ENCODE measurements at regions of chr1 and their contacts with region 1.

Region 1: GRCh38 chr1:33349778-33350610 is 29.1 kb upstream of the A3GALT2 start:
- DNase-seq: peak; percentile 77
- ATAC-seq: peak; percentile 88
- H3K4me3 Mint-ChIP-seq: peak overlapping the region; percentile 91
- H3K27ac Mint-ChIP-seq: peak overlapping the region; percentile 93
- H3K4me1 Mint-ChIP-seq: peaks cover 37% of the 10 kb centered on the region
- H3K27me3 Mint-ChIP-seq: no peaks in the 10 kb centered on the region
- CTCF ChIP-seq: no peak

Region 2: DNA sequence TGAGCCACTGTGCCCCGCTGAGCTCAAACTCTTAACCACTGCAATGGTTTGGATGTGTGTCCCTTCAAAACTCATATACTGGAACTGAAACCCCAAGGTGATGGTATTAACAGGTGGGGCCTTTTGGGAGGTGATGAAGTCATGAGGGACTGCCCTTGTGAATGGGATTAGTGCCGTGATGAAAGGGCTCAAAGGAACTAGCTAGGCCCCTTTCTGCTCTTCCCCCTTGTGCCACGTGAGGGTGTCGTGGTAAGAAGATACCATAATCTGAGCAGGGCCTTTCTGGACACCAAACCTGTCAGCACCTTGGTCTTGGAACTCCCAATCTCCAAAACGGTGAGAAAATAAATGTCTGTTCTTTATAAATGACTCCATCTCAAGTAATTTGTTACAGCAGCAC is 1488.6 kb before region 1 on chr1:
- CTCF ChIA-PET with region 1: no interaction called
- POLR2A ChIA-PET with region 1: no interaction called
- intact Hi-C with region 1: no loop called
- DNase-seq: no peak
- ATAC-seq: peak; percentile 67
- H3K4me3 Mint-ChIP-seq: no peak overlapping the region
- H3K27ac Mint-ChIP-seq: no peak overlapping the region
- H3K4me1 Mint-ChIP-seq: peaks cover 6% of the 10 kb centered on the region
- H3K27me3 Mint-ChIP-seq: no peaks in the 10 kb centered on the region
- CTCF ChIP-seq: no peak

Region 3: DNA sequence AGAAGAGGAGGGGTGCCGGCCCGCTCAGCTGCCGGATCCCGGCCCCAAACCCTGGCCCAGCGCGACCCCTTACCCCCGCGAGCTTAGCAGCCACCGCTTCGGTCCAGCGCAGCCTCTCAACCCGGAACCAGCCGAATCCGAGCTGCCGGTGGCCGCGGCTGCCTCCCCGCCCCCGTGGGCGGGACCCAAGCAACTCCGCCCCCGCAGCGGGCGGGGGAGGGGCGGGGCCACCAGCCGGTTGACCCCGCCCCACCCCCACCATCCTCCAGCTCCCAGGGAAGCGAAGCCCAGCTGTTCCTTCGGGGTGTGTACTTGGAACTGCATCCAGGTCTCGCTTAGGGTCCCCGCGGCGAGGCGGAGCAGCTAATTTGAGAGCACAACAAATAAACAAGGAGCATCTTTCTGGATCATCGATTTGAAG is 168.1 kb before region 1 on chr1 and contains the start of gene TRIM62:
- CTCF ChIA-PET with region 1: no interaction called
- POLR2A ChIA-PET with region 1: interaction called, 8 read pairs
- intact Hi-C with region 1: loop called (anchors 1 kb)
- DNase-seq: peak; percentile 80
- ATAC-seq: peak; percentile 67
- H3K4me3 Mint-ChIP-seq: peak within 1 kb of the TSS; percentile 89
- H3K27ac Mint-ChIP-seq: peak within 1 kb of the TSS; percentile 79
- H3K4me1 Mint-ChIP-seq: peaks cover 21% of the 10 kb centered on the region
- H3K27me3 Mint-ChIP-seq: peaks cover 9% of the 10 kb centered on the region
- CTCF ChIP-seq: no peak
- total RNA-seq, gene TRIM62: 10.1 and 10.9 TPM in 2 replicates

Region 4: GRCh38 chr1:33211972-33212371 is 138.0 kb before region 1 on chr1:
- CTCF ChIA-PET with region 1: no interaction called
- POLR2A ChIA-PET with region 1: no interaction called
- intact Hi-C with region 1: no loop called
- DNase-seq: no peak
- ATAC-seq: peak; percentile 14
- H3K4me3 Mint-ChIP-seq: no peak overlapping the region
- H3K27ac Mint-ChIP-seq: no peak overlapping the region
- H3K4me1 Mint-ChIP-seq: no peaks in the 10 kb centered on the region
- H3K27me3 Mint-ChIP-seq: peaks cover 36% of the 10 kb centered on the region
- CTCF ChIP-seq: no peak

Region 5: DNA sequence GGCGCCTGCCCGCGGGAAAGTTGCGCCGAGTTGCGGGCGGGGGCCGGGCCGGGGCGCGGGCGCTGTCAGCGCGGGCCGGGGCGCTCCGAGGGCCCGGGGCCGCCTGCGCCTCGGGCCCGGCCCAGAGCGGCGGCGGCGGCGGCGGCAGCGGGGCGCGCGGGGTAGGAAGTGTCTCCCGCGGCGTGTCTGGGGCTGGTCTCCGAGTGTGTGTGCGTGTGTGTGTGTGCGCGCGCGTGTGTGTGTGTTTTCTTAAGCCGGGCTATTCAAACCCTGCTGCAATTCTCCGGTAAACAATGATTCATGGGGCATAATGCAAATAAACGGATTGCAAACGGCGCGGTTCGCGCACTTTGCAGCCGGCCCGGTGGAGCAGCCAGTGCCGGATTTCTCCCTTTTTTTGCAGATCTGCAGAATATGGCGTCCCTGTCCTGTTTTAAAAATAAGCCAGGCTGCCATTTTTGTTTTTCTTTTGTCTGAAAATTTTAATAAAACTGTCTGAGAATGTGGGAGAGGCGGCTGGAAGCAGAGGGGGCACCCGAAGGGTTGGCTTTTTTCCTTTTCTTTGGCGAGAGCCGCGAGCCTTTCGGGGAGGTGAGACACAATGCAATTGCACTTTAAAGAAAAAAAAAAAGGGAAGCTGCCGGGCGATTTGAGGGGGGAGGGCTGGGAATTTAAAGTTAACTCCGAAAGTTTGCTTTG is 93.1 kb before region 1 on chr1:
- CTCF ChIA-PET with region 1: no interaction called
- POLR2A ChIA-PET with region 1: interaction called, 3 read pairs
- intact Hi-C with region 1: loop called (anchors 5 kb)
- DNase-seq: no peak
- ATAC-seq: peak; percentile 60
- H3K4me3 Mint-ChIP-seq: peak overlapping the region; percentile 97
- H3K27ac Mint-ChIP-seq: peak overlapping the region; percentile 95
- H3K4me1 Mint-ChIP-seq: peaks cover 34% of the 10 kb centered on the region
- H3K27me3 Mint-ChIP-seq: no peaks in the 10 kb centered on the region
- CTCF ChIP-seq: no peak

Region 6: DNA sequence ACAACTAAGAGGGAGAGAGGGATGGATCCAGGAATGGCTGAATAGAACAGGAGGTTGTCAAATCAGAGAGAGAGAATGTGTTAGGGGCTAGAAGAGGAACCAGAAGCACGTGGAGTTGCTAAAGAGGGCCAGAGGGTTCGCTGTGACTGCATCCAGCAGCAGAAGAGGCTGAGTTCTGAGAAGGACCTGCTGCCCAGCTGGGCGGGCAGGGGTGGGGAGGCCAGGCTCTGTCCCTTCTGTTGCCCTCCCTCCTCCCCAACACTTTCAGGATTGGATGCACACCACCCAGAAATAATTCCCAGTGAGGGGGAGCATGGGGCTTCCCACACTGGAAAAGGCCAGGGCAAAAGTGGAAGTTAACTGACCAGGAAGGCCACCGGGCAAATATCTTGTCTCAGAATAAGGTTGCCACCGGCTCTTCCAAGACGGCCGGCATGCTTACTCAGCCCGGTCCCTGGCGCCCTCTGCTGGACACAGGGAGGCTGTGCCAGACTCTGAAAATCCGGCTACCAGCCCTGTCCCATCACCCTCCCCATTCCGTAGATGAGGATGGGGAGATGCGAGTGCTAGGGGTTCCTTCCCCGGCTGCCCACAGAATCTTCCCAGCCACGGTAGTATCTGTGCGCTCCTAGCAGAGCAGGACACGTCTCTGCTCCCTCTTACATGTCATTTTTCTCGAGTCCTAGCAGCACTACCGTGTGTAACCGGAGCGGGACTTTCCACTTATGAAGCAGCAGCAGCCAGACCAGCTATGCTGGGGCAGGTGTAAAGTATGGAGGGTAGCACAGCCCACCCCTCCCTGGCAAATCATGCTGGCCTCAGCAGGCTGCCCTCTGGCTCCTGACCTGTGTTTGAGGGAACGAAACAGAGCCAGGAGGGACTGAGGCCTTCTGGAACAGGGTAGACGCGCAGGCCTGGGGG is 17.8 kb after region 1 on chr1:
- CTCF ChIA-PET with region 1: no interaction called
- POLR2A ChIA-PET with region 1: interaction called, 3 read pairs
- intact Hi-C with region 1: loop called (anchors 1 kb)
- DNase-seq: peak; percentile 74
- ATAC-seq: peak; percentile 99
- H3K4me3 Mint-ChIP-seq: no peak overlapping the region
- H3K27ac Mint-ChIP-seq: no peak overlapping the region
- H3K4me1 Mint-ChIP-seq: no peaks in the 10 kb centered on the region
- H3K27me3 Mint-ChIP-seq: peaks cover 8% of the 10 kb centered on the region
- CTCF ChIP-seq: peak; percentile 48

Region 7: GRCh38 chr1:33430692-33431593 is 80.9 kb after region 1 on chr1 and contains the start of gene PHC2:
- CTCF ChIA-PET with region 1: no interaction called
- POLR2A ChIA-PET with region 1: no interaction called
- intact Hi-C with region 1: loop called (anchors 1 kb)
- DNase-seq: peak; percentile 85
- ATAC-seq: peak; percentile 96
- H3K4me3 Mint-ChIP-seq: peak within 1 kb of the TSS; percentile 66
- H3K27ac Mint-ChIP-seq: no peak within 1 kb of the TSS
- H3K4me1 Mint-ChIP-seq: peaks cover 5% of the 10 kb centered on the region
- H3K27me3 Mint-ChIP-seq: peaks cover 6% of the 10 kb centered on the region
- CTCF ChIP-seq: no peak
- total RNA-seq, gene PHC2: 16.4 and 18.1 TPM in 2 replicates